CD8-positive, alpha-beta T cell (primary cell): ENCODE measurements at regions of chr7 and their contacts with region 1.

Region 1: DNA sequence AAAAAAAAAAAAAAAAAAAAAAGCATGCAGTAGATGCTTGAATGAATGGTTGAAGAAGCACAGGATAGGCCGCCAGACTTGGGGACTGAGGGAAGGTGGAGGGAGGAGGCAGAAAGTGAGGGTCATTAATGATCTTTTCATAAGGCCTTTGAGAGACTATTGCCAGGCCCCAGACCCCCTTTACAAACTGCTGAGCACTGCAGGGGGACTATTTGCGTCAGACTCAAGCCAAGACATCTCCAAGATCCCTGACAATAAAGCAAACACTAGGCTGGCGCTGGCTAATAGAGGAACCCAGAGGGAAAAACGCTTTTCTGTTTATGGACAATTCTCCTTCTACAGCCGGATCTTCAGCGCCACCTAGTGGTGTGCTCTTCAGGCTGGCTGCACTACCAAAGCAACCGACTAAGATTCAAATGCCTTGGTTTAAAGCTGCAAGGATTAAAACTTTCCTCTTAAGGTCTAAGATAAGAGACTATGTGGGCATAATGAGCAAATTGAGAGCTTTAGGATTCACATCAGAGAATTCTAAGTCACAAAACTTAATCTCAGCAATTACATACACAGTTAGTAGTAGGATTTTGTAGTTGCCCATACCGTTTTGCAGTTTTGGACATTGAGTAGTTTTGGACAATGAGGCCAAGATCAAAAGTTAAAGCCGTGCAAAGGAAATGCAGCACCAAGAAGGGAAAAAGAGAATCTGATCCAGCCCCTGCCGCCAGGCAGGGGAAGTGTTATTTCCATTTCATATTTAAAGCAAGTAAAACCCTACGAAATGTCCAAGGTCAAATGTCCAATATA is 17.9 kb upstream of the AGK start:
- DNase-seq: peak; percentile 19 to 80 (median 61)
- ATAC-seq: peak; percentile 56
- H3K4me3 ChIP-seq: no peak overlapping the region
- H3K4me3 Mint-ChIP-seq: no peak overlapping the region
- H3K27ac ChIP-seq: no peak overlapping the region
- H3K27ac Mint-ChIP-seq: no peak overlapping the region
- H3K4me1 ChIP-seq: no peaks in the 10 kb centered on the region
- H3K4me1 Mint-ChIP-seq: no peaks in the 10 kb centered on the region
- H3K27me3 ChIP-seq: no peaks in the 10 kb centered on the region
- H3K27me3 Mint-ChIP-seq: peaks cover 35% of the 10 kb centered on the region
- CTCF ChIP-seq: peak; percentile 90

Region 2: GRCh38 chr7:140517546-140518369 is 1015.6 kb before region 1 on chr7:
- CTCF ChIA-PET with region 1: no interaction called
- POLR2A ChIA-PET with region 1: no interaction called
- intact Hi-C with region 1: loop called in 1 of 2 experiments (anchors 2 kb)
- DNase-seq: peak; percentile 16 to 79 (median 69)
- ATAC-seq: peak; percentile 62
- H3K4me3 ChIP-seq: no peak overlapping the region
- H3K4me3 Mint-ChIP-seq: no peak overlapping the region
- H3K27ac ChIP-seq: no peak overlapping the region
- H3K27ac Mint-ChIP-seq: no peak overlapping the region
- H3K4me1 ChIP-seq: no peaks in the 10 kb centered on the region
- H3K4me1 Mint-ChIP-seq: peaks cover 4% of the 10 kb centered on the region
- H3K27me3 ChIP-seq: no peaks in the 10 kb centered on the region
- H3K27me3 Mint-ChIP-seq: peaks cover 9% of the 10 kb centered on the region
- CTCF ChIP-seq: peak; percentile 28

Region 3: DNA sequence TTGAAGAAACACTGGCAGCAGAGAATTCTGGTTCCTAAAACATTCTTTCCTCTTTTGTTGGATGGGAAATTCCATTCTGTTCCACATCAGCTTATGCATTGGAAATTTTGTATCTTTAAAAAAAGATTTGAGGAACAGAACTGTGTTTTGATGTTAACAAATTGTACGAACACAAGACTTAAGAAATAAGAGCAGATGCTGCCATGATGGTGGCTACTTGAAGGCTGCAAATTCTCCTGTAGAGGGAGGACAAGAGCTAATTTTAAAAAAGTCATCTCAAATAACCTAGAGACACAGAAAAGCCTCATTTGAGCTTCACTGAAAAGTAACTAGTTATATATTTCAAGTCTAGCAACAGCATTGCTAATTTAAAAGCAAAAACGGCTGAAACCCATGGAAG is 807.1 kb before region 1 on chr7:
- CTCF ChIA-PET with region 1: no interaction called
- POLR2A ChIA-PET with region 1: no interaction called
- intact Hi-C with region 1: loop called in 1 of 2 experiments (anchors 10 kb)
- DNase-seq: peak in 2 of 9 experiments; percentile 11 to 38
- ATAC-seq: no peak
- H3K4me3 ChIP-seq: no peak overlapping the region
- H3K4me3 Mint-ChIP-seq: no peak overlapping the region
- H3K27ac ChIP-seq: no peak overlapping the region
- H3K27ac Mint-ChIP-seq: no peak overlapping the region
- H3K4me1 ChIP-seq: peaks cover 13% of the 10 kb centered on the region
- H3K4me1 Mint-ChIP-seq: peaks cover 26% of the 10 kb centered on the region
- H3K27me3 ChIP-seq: no peaks in the 10 kb centered on the region
- H3K27me3 Mint-ChIP-seq: no peaks in the 10 kb centered on the region
- CTCF ChIP-seq: peak; percentile 25

Region 4: DNA sequence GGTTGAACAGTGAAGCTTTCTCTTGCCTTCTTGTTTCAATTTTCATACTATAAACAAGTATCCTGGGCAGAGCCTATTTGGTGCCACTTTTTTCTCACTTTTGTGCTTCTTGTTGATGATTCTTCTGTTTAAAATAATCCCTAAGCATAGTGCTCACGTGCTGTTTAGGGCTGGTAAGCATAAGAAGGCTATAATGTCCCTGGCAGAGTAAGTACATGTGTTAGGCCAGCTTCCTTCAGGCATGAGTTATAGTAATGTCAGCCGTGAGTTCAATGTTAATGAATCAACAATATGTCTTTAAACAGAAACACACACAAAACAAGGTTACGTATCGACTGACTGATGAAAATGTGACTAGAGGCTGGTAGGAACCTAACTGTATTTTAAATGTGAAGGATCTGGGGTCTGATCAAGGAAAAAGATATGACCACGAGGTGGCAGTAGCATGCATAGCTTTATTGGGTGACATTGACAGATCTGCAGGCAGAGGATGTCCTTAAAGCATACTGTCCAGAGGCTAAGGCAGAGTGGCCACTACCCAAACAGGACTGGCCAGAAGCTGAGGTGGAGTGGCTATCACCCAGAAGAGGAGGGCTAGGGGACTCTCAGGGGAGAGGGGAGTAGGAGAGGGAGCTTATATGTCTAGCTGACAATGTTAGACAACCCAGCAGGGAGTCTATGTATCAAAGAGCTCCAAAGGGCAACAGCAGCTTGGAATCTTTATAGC is 722.4 kb before region 1 on chr7:
- CTCF ChIA-PET with region 1: interaction called, 3 read pairs
- POLR2A ChIA-PET with region 1: no interaction called
- intact Hi-C with region 1: loop called in 1 of 2 experiments (anchors 5 kb)
- DNase-seq: peak; percentile 17 to 82 (median 61)
- ATAC-seq: peak; percentile 72
- H3K4me3 ChIP-seq: no peak overlapping the region
- H3K4me3 Mint-ChIP-seq: no peak overlapping the region
- H3K27ac ChIP-seq: no peak overlapping the region
- H3K27ac Mint-ChIP-seq: no peak overlapping the region
- H3K4me1 ChIP-seq: no peaks in the 10 kb centered on the region
- H3K4me1 Mint-ChIP-seq: peaks cover 4% of the 10 kb centered on the region
- H3K27me3 ChIP-seq: no peaks in the 10 kb centered on the region
- H3K27me3 Mint-ChIP-seq: no peaks in the 10 kb centered on the region
- CTCF ChIP-seq: peak; percentile 76

Region 5: GRCh38 chr7:141071260-141071854 is 462.0 kb before region 1 on chr7:
- CTCF ChIA-PET with region 1: interaction called, 4 read pairs
- POLR2A ChIA-PET with region 1: no interaction called
- intact Hi-C with region 1: loop called in 1 of 2 experiments (anchors 2 kb)
- DNase-seq: peak in 5 of 9 experiments; percentile 21 to 57 (median 32)
- ATAC-seq: no peak
- H3K4me3 ChIP-seq: peak overlapping the region; percentile 31 to 47
- H3K4me3 Mint-ChIP-seq: peak overlapping the region; percentile 75
- H3K27ac ChIP-seq: no peak overlapping the region
- H3K27ac Mint-ChIP-seq: no peak overlapping the region
- H3K4me1 ChIP-seq: peaks cover 26% of the 10 kb centered on the region
- H3K4me1 Mint-ChIP-seq: peaks cover 21% of the 10 kb centered on the region
- H3K27me3 ChIP-seq: peaks cover 14 to 22% of the 10 kb centered on the region in 2 experiments
- H3K27me3 Mint-ChIP-seq: peaks cover 51% of the 10 kb centered on the region
- CTCF ChIP-seq: no peak

Region 6: GRCh38 chr7:141522657-141523342 is 10.5 kb before region 1 on chr7:
- CTCF ChIA-PET with region 1: interaction called, 19 read pairs
- POLR2A ChIA-PET with region 1: interaction called, 6 read pairs
- intact Hi-C with region 1: no loop called
- DNase-seq: no peak
- ATAC-seq: no peak
- H3K4me3 ChIP-seq: no peak overlapping the region
- H3K4me3 Mint-ChIP-seq: no peak overlapping the region
- H3K27ac ChIP-seq: no peak overlapping the region
- H3K27ac Mint-ChIP-seq: no peak overlapping the region
- H3K4me1 ChIP-seq: no peaks in the 10 kb centered on the region
- H3K4me1 Mint-ChIP-seq: no peaks in the 10 kb centered on the region
- H3K27me3 ChIP-seq: no peaks in the 10 kb centered on the region
- H3K27me3 Mint-ChIP-seq: peaks cover 14% of the 10 kb centered on the region
- CTCF ChIP-seq: no peak

Region 7: DNA sequence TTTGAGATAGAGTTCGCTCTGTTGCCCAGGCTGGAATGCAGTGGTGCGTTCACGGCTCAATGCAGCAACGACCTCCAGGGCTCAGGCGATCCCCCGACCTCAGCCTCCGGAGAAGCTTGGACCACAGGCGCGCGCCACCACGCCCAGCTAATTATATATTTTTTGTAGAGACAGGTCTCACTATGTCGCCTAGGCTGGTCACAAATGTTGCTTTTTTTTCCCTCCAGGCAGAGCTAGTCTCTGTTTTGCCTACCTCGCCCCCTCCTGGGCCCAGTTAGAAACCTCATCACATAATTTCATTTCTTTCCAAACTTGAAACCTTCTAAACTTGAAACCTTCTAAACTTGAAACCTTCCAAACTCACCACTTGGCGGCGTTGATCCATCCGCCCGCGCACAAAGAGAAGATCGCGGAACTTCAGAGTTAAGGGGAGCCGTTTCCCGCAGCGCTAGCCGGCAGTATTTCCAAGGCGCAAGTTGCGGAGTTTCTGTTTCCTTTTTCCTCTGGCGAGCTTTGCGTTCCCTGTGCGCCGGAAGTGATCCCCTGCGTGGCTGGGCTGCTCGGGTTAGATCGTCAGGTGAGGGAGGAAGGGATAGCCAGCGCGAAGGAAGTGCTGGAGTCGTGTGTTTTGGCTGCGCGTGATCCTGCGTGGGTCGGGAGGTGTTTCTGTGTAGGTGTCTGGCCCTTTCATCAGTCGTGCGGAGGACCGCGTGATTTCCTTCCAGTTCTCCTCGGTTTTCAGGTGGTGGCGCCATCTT is 204.7 kb after region 1 on chr7 and contains the start of gene SSBP1:
- CTCF ChIA-PET with region 1: no interaction called
- POLR2A ChIA-PET with region 1: no interaction called
- intact Hi-C with region 1: no loop called
- DNase-seq: peak; percentile 84 to 98 (median 90)
- ATAC-seq: peak; percentile 84
- H3K4me3 ChIP-seq: peak within 1 kb of the TSS; percentile 63 to 83
- H3K4me3 Mint-ChIP-seq: peak within 1 kb of the TSS; percentile 99
- H3K27ac ChIP-seq: peak within 1 kb of the TSS; percentile 77 to 81
- H3K27ac Mint-ChIP-seq: peak within 1 kb of the TSS; percentile 99
- H3K4me1 ChIP-seq: peaks cover 30% of the 10 kb centered on the region
- H3K4me1 Mint-ChIP-seq: peaks cover 45% of the 10 kb centered on the region
- H3K27me3 ChIP-seq: no peaks in the 10 kb centered on the region
- H3K27me3 Mint-ChIP-seq: no peaks in the 10 kb centered on the region
- CTCF ChIP-seq: peak; percentile 85
- total RNA-seq, gene SSBP1: 107 TPM